ENCODE measurements at regions of chr12 and their contacts with region 1.

Region 1: DNA sequence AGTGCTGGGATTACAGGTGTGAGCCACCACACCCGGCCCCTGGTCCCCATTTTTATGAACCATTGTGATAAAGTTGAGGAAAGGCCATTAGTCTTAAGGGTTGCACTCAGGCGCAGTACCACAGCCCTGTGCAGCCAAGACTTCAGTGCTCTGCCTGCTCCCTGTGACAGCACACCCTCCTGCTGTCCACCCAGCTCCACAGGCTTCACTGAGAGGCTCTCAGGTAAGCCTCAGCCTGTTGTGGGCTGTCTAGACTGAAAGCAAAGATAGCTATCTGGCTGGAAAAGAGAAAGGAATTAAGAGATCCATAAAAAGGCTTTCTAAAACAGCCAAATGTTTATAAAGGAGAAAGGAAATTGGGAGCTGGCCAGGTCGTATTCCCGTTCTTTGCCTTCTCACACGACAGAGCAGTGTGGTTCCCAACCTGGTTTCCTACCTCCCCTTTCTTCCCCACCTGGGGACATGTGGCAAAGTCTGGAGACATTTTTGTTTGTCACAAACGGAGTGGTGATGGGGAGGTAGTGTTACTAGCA is 19.1 kb upstream of the DNM1L start:
- DNase-seq: no peak
- H3K4me3 Mint-ChIP-seq: no peak overlapping the region
- H3K27ac Mint-ChIP-seq: no peak overlapping the region
- H3K4me1 Mint-ChIP-seq: peaks cover 8% of the 10 kb centered on the region
- H3K27me3 Mint-ChIP-seq: peaks cover 4% of the 10 kb centered on the region

Region 2: DNA sequence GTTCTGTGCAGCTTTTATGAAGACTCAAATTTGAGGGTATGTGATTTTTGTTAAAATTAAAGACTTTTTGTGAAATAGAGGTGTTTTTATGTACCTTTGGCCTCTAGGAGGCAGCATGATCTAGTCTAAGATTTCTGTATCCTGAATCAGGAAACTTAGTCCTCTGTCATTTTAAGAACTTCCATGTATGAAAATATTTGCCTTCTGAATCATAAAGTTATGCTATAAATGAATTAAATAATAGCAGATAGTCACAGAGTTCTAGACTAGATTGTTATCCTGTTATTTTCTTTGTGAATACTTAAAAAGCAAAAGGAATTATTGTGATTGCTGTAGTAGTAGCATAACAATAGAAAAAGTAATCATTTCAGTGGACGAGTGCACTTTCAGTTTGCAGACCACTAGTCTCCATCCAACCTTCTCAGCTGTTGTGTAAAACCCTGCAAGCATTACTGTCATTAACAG is 204.3 kb before region 1 on chr12:
- CTCF ChIA-PET with region 1: interaction called, 37 read pairs
- DNase-seq: no peak
- H3K4me3 Mint-ChIP-seq: no peak overlapping the region
- H3K27ac Mint-ChIP-seq: no peak overlapping the region
- H3K4me1 Mint-ChIP-seq: no peaks in the 10 kb centered on the region
- H3K27me3 Mint-ChIP-seq: peaks cover 8% of the 10 kb centered on the region

Region 3: GRCh38 chr12:32568241-32568640 is 91.7 kb before region 1 on chr12:
- CTCF ChIA-PET with region 1: no interaction called
- DNase-seq: no peak
- H3K4me3 Mint-ChIP-seq: no peak overlapping the region
- H3K27ac Mint-ChIP-seq: no peak overlapping the region
- H3K4me1 Mint-ChIP-seq: no peaks in the 10 kb centered on the region
- H3K27me3 Mint-ChIP-seq: peaks cover 4% of the 10 kb centered on the region